ENCODE measurements at regions of chr7 and their contacts with region 1.

Region 1: GRCh38 chr7:41940760-41941343 is 238.0 kb upstream of the INHBA start:
- DNase-seq: peak; percentile 72 to 77
- H3K4me3 ChIP-seq: no peak overlapping the region
- H3K27ac ChIP-seq: no peak overlapping the region
- H3K4me1 ChIP-seq: no peaks in the 10 kb centered on the region
- H3K27me3 ChIP-seq: no peaks in the 10 kb centered on the region
- CTCF ChIP-seq: peak; percentile 86 to 91 (median 90)
- POLR2A ChIP-seq: no peak

Region 2: DNA sequence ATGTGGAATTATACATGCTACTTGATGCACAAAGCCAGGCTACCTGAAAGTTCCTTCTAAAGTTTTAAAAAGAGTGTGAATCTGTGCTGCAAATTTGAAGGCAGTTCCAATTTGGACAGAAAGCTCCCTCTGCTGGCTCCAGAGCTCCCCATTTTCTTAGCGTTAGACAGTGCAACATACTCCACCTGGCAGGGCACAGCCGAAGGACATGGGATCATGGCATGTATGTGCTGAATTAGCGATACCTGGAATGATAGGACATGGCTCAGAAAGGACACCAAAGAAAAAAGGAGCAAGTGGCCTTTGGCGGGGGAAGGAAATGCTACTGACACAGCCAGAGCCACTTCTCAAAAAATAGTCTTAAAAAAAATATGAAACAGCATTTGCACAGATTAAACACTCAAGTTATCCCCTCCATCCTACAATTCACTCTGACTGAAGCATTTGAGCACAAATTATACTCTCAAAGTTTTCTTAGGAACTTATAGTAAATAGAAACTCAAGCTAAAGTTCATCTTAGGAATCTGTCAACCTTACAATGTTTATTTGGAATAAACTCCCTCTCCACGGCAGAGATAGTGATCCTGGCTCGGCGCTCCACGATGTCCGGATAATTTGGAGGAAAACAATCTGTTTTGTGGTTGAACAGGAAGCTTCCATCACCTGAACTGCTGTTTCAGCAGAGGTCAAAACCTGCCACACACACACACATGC is 891.0 kb after region 1 on chr7:
- intact Hi-C with region 1: loop called (anchors 10 kb)
- DNase-seq: peak; percentile 55 to 57
- H3K4me3 ChIP-seq: peak overlapping the region in 1 of 2 donors; percentile 2
- H3K27ac ChIP-seq: peak overlapping the region; percentile 62 to 68
- H3K4me1 ChIP-seq: peaks cover 0 to 9% of the 10 kb centered on the region in 2 donors
- H3K27me3 ChIP-seq: no peaks in the 10 kb centered on the region
- CTCF ChIP-seq: peak; percentile 64 to 85 (median 71)
- POLR2A ChIP-seq: no peak